Heart right ventricle (tissue), 16 donors: ENCODE measurements at regions of chr5 and their contacts with region 1.

Region 1: DNA sequence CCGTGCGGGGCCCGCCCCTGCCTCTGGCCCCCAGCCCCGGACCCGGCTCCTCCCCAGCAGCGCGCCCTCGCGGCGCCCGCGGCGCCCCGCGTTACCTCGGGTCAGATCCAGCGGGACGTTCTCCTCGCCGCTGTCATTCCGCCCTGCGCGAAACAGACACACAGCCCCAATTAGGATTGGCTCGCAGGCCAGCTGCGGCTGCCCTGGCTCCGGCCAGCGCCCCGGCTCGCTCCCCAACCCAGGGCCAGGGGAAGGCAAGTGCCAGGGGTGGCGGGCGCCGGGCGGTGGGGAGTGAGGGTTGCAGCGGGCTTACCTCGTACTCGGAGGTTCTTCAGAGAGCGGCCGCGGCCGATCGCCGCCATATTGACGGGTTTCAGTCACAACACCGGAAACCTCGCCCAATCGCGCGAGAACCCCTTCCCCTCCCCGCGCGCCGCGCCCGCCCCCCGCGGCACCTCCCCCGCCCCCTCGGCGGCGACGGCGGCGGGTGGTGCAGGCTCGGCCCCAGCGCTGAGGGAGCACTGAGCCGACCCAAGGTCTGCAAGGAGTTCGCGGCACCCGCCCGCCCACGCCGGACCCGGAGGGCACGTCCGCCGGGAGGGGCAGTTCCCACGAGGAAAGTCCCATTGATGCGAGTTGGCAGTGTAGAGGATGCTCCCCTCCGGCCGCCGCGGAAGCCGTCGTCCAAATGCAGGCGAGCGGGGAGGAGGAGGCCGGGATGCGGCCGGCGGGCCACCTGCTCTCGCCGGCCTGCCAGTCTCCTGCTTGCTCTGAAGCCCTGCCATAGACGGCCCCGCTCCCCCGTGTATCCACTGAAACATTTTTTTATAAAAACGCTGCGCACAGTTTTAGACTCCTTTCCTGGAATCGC is at the start of gene RICTOR:
- DNase-seq: peak; percentile 94 to 95
- ATAC-seq: peak; percentile 92 to 98 (median 95)
- H3K4me3 ChIP-seq: peak within 1 kb of the TSS; percentile 73 to 94 (median 87)
- H3K27ac ChIP-seq: peak within 1 kb of the TSS; percentile 97 to 100 (median 98)
- H3K4me1 ChIP-seq: peaks cover 0 to 53% (median 25%) of the 10 kb centered on the region in 9 donors
- H3K27me3 ChIP-seq: no peaks in the 10 kb centered on the region
- CTCF ChIP-seq: no peak
- total RNA-seq, gene RICTOR: 23.2 to 88.3 (median 51.7) TPM

Region 2: GRCh38 chr5:38831909-38832308 is 242.3 kb before region 1 on chr5:
- intact Hi-C with region 1: loop called in 1 of 10 experiments (anchors 10 kb)
- DNase-seq: no peak
- ATAC-seq: peak in 5 of 8 donors; percentile 12 to 53 (median 39)
- H3K4me3 ChIP-seq: no peak overlapping the region
- H3K27ac ChIP-seq: no peak overlapping the region
- H3K4me1 ChIP-seq: peaks cover 2 to 24% (median 12%) of the 10 kb centered on the region in 9 donors
- H3K27me3 ChIP-seq: no peaks in the 10 kb centered on the region
- CTCF ChIP-seq: peak in 8 of 9 donors; percentile 9 to 57 (median 44)

Region 3: GRCh38 chr5:38994324-38994927 is 79.8 kb before region 1 on chr5:
- intact Hi-C with region 1: loop called in 1 of 10 experiments (anchors 1 kb)
- DNase-seq: peak in 1 of 2 donors; percentile 20
- ATAC-seq: peak; percentile 50 to 85 (median 78)
- H3K4me3 ChIP-seq: no peak overlapping the region
- H3K27ac ChIP-seq: no peak overlapping the region
- H3K4me1 ChIP-seq: peaks cover 0 to 22% (median 5%) of the 10 kb centered on the region in 9 donors
- H3K27me3 ChIP-seq: no peaks in the 10 kb centered on the region
- CTCF ChIP-seq: peak; percentile 32 to 72 (median 59)

Region 4: GRCh38 chr5:39005566-39006232 is 68.6 kb before region 1 on chr5:
- intact Hi-C with region 1: loop called in 4 of 10 experiments (anchors 5 kb)
- DNase-seq: no peak
- ATAC-seq: peak in 6 of 8 donors; percentile 71 to 92 (median 82)
- H3K4me3 ChIP-seq: no peak overlapping the region
- H3K27ac ChIP-seq: peak overlapping the region in 4 of 10 donors; percentile 1 to 39 (median 8)
- H3K4me1 ChIP-seq: peaks cover 0 to 25% (median 14%) of the 10 kb centered on the region in 9 donors
- H3K27me3 ChIP-seq: no peaks in the 10 kb centered on the region
- CTCF ChIP-seq: peak in 8 of 9 donors; percentile 7 to 67 (median 46)

Region 5: GRCh38 chr5:39015743-39016586 is 58.3 kb before region 1 on chr5:
- intact Hi-C with region 1: loop called in 5 of 10 experiments (anchors 5 kb)
- DNase-seq: no peak
- ATAC-seq: peak; percentile 49 to 72 (median 66)
- H3K4me3 ChIP-seq: no peak overlapping the region
- H3K27ac ChIP-seq: peak overlapping the region; percentile 34 to 90 (median 76)
- H3K4me1 ChIP-seq: peaks cover 2 to 54% (median 28%) of the 10 kb centered on the region in 9 donors
- H3K27me3 ChIP-seq: no peaks in the 10 kb centered on the region
- CTCF ChIP-seq: no peak

Region 6: DNA sequence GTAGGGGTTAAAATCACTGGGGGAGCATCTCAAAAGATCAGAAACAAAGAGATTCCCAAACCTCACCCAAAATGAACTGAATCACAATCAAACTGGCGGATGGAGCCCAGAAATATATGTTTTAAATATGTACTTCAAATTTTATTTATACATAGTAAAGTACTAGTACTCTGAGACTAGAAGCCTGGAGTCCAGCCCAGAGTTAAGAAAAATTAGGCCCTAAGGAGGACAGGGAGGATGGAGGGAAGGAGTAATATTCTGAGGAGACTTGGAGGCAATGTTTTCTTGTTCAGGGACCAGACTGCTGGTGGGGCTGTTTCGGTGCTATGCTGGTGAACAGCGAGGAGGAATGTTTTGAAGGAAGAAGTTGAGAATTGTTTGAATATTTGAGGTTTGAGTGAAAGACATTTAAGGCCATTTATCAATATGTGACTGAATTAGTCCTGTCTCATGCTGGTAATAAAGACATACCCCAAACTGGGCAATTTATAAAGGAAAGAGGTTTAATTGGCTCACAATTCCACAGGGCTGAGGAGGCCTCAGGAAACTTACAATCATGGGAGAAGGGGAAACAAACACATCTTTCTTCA is 902.9 kb after region 1 on chr5:
- intact Hi-C with region 1: no loop called
- DNase-seq: no peak
- ATAC-seq: no peak
- H3K4me3 ChIP-seq: no peak overlapping the region
- H3K27ac ChIP-seq: no peak overlapping the region
- H3K4me1 ChIP-seq: no peaks in the 10 kb centered on the region
- H3K27me3 ChIP-seq: no peaks in the 10 kb centered on the region
- CTCF ChIP-seq: no peak